ENCODE measurements at regions of chr4 and their contacts with region 1.

Region 1: DNA sequence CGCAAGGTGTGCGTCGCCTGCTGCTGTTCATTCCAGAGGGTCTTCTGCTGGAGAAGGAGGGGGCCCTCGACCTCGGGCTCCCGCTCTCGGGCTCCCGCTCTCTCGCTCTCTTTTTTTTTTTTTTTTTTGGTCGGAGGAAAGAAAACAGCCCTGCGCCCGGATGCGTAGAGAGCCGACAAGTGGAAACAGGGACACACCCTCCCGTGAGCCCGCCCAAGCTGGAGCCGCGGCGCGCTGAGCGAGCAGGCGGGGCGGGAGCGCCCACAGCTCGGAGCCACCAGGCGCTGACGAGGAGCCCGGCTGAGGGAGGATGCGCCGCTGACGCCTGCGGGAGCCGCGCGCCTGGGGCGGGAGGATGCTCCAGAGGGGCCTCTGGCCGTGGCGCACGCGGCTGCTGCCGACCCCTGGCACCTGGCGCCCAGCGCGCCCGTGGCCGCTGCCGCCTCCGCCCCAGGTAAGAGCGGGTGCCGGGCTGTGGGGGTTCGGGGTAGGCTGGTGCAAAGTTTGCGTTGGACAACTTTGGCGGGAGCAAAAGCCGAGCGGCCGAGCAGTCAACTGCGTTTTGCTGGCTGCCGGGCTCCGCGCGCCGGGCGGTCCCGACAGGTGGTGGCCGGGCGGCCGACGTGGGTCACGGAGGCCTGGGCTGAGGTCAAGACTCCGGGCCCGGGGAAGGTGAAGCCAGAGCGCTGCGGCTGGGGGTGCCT is at the start of gene MCUB:
- DNase-seq: peak; percentile 95
- H3K4me3 ChIP-seq: peak within 1 kb of the TSS; percentile 76
- H3K27ac ChIP-seq: peak within 1 kb of the TSS; percentile 87
- H3K4me1 ChIP-seq: peaks cover 44% of the 10 kb centered on the region
- CTCF ChIP-seq: no peak
- total RNA-seq, gene MCUB: 39.1 and 40.3 TPM in 2 replicates

Region 2: DNA sequence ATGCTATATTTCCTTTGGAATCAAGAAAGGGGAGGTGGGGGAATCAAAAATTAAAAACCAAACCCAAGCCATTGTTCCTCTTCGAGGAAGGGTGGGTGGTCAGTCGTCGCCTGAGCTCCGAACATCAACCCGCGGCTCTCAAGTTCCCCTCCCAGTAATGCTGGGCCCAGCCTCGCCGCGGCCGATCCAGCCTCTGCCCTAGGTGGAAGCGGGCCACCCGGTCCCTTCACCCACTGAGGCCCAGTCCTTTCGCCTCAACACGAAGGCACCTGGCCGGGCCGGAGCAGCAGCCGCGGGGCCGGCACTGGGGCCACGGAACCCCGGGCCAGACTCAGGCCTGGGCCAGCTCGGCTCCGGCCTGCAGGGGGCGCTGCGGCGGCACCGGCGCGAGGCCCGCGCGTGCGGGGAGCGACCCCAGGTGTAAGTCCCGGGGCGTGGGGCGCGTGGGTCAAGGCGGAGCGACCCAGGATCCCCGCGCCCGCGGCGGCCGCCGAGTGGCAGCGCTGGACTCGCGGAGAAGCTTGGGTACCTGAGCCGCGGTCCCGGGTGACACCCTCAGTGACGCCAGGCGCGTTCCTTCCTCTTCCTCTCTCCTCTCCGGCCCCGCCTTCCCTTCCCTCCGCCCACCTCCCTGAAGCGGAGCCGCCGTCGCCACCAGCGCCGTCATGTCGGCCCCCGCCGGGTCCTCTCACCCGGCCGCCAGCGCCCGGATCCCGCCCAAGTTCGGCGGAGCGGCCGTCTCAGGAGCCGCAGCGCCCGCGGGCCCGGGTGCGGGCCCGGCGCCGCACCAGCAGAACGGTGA is 126.7 kb before region 1 on chr4 and contains the start of gene SEC24B:
- CTCF ChIA-PET with region 1: no interaction called
- POLR2A ChIA-PET with region 1: interaction called, 8 read pairs
- intact Hi-C with region 1: loop called (anchors 1 kb)
- DNase-seq: peak; percentile 89
- H3K4me3 ChIP-seq: peak within 1 kb of the TSS; percentile 93
- H3K27ac ChIP-seq: peak within 1 kb of the TSS; percentile 28
- H3K4me1 ChIP-seq: peaks cover 22% of the 10 kb centered on the region
- CTCF ChIP-seq: peak; percentile 85
- total RNA-seq, gene SEC24B: 8.7 and 13.1 TPM in 2 replicates

Region 3: GRCh38 chr4:109589115-109589514 is 29.0 kb after region 1 on chr4:
- CTCF ChIA-PET with region 1: no interaction called
- POLR2A ChIA-PET with region 1: interaction called, 11 read pairs
- intact Hi-C with region 1: loop called (anchors 1 kb)
- DNase-seq: peak; percentile 5
- H3K4me3 ChIP-seq: no peak overlapping the region
- H3K27ac ChIP-seq: no peak overlapping the region
- H3K4me1 ChIP-seq: peaks cover 33% of the 10 kb centered on the region
- CTCF ChIP-seq: no peak

Region 4: DNA sequence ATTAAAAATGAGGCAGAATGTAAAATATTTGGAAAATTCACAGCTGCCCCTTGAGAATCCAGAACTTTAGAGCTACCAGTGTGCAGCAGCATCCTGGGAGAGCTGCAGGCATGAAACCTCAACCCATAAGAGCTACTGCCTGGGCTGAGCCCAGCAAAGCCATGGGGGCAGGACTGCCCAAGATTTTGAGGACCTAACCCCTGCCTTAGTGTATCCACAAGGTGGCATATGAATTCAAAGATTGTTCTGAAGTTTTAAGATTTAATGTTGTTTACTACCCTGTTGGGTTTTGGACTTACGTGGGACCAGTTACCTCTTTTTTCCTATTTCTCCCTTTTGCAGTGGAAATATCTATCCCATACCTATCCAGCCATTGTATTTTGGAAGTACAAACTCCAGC is 116.8 kb after region 1 on chr4:
- CTCF ChIA-PET with region 1: no interaction called
- POLR2A ChIA-PET with region 1: no interaction called
- intact Hi-C with region 1: no loop called
- DNase-seq: no peak
- H3K4me3 ChIP-seq: no peak overlapping the region
- H3K27ac ChIP-seq: no peak overlapping the region
- H3K4me1 ChIP-seq: no peaks in the 10 kb centered on the region
- CTCF ChIP-seq: no peak

Region 5: DNA sequence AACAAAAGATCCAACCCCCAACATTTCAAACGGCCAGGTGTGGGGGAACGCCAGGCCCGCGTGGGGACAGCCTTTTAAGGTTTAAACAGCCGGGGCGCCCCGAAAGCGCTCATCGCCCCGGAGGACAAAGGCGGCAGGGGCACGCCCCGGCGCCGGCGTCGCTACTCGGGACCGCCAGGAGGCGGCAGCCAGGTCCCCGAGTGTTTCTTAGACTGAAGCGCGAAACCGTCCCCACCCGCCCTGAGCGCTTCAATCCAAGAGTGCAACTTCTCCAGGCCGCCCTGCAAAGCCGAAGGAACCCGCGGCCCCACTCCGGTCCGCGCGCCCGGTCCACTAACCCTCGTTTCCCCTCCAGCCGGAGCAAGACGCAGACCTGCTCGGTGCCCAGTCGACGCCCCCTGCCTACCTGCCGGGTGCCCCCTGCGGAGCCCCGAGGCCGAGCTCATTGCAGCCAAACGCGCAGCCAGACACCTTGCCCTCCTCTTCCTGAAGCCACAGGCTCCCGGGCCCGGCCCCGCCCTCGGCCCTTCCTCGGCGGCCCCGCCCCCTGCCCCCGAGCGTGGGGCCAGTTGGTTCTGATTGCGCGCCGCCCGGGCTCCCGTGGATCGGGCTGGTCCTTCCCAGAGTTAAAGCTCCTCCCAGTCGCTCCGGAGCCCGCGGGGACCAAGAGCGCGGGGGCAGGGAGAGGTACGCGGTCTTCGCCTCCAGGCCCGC is 143.0 kb after region 1 on chr4 and contains the start of gene CASP6:
- CTCF ChIA-PET with region 1: no interaction called
- POLR2A ChIA-PET with region 1: no interaction called
- intact Hi-C with region 1: loop called (anchors 1 kb)
- DNase-seq: peak; percentile 80
- H3K4me3 ChIP-seq: peak within 1 kb of the TSS; percentile 75
- H3K27ac ChIP-seq: no peak within 1 kb of the TSS
- H3K4me1 ChIP-seq: peaks cover 18% of the 10 kb centered on the region
- CTCF ChIP-seq: peak; percentile 75
- total RNA-seq, gene CASP6: 8.1 and 10.1 TPM in 2 replicates

Region 6: DNA sequence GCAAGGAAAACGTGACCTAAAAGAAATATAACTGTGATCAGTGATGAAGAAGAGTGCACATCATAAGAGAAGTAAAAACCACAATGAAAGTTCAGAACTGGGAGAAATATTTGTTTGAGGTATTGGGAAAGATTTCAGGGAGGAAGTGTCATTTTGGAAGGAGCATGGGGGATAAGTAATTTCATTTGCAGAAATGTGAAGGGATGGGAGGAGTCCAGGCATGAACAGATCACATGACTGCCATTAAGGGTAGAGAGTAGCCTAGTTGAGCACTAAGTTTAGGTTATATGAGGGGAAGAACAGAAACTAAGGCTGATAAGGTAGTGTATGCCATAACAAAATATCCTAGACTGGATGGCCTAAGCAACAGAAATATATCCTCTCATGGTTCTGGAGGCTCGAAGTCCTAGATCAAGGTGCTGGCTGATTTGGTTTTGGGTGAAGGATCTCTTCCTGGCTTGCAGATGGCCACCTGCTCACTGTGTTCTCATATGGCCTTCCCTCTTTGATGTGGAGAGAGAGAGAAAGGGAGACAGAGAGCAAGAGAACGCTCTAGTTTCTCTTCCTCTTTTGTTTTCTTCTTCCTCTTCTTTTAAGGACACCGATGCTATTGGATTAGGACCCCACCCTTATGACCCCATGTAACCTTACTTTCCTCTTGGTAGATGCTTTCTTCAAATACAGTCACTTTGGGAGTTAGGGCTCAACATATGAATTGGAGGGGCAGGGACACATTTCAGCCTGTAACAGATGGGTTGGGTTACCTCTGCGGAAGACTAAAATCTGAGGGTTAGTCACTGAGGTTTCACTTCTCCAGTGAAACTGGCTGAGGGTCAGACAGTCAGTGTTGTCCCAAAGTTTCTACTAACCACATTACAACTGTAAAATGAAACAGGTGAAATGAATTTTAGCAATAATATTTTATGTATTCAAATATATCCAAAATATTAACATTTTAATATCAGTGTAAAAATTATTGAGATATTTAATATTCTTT is 430.4 kb after region 1 on chr4:
- CTCF ChIA-PET with region 1: no interaction called
- POLR2A ChIA-PET with region 1: no interaction called
- intact Hi-C with region 1: loop called (anchors 5 kb)
- DNase-seq: peak; percentile 95
- H3K4me3 ChIP-seq: peak overlapping the region; percentile 17
- H3K27ac ChIP-seq: peak overlapping the region; percentile 97
- H3K4me1 ChIP-seq: peaks cover 88% of the 10 kb centered on the region
- CTCF ChIP-seq: no peak

Measured in OCI-LY7 (cell line).